ENCODE measurements at regions of chr20 and their contacts with region 1.

Region 1: GRCh38 chr20:37693635-37694626 is at the start of gene CTNNBL1:
- DNase-seq: peak; percentile 99
- ATAC-seq: peak; percentile 93
- H3K4me3 ChIP-seq: peak within 1 kb of the TSS; percentile 94
- H3K27ac ChIP-seq: no peak within 1 kb of the TSS
- H3K4me1 ChIP-seq: peaks cover 6% of the 10 kb centered on the region; the same call in 1 of the 2 replicates
- H3K27me3 ChIP-seq: no peaks in the 10 kb centered on the region
- CTCF ChIP-seq: no peak
- total RNA-seq, gene CTNNBL1: 49.9 and 50.9 TPM in 2 replicates

Region 2: GRCh38 chr20:37615340-37616109 is 78.4 kb before region 1 on chr20:
- CTCF ChIA-PET with region 1: no interaction called
- POLR2A ChIA-PET with region 1: no interaction called
- intact Hi-C with region 1: loop called (anchors 1 kb)
- DNase-seq: peak; percentile 83
- ATAC-seq: peak; percentile 93
- H3K4me3 ChIP-seq: no peak overlapping the region
- H3K27ac ChIP-seq: no peak overlapping the region
- H3K4me1 ChIP-seq: no peaks in the 10 kb centered on the region
- H3K27me3 ChIP-seq: peaks cover 29% of the 10 kb centered on the region
- CTCF ChIP-seq: peak; percentile 86

Region 3: GRCh38 chr20:37741055-37741454 is 47.1 kb after region 1 on chr20:
- CTCF ChIA-PET with region 1: no interaction called
- POLR2A ChIA-PET with region 1: no interaction called
- intact Hi-C with region 1: loop called (anchors 2 kb)
- DNase-seq: peak; percentile 89
- ATAC-seq: peak; percentile 98
- H3K4me3 ChIP-seq: no peak overlapping the region
- H3K27ac ChIP-seq: peak overlapping the region; percentile 85
- H3K4me1 ChIP-seq: peaks cover 33% of the 10 kb centered on the region
- H3K27me3 ChIP-seq: no peaks in the 10 kb centered on the region
- CTCF ChIP-seq: no peak